GM12878 (cell line): ENCODE measurements at regions of chr15 and their contacts with region 1.

Region 1: DNA sequence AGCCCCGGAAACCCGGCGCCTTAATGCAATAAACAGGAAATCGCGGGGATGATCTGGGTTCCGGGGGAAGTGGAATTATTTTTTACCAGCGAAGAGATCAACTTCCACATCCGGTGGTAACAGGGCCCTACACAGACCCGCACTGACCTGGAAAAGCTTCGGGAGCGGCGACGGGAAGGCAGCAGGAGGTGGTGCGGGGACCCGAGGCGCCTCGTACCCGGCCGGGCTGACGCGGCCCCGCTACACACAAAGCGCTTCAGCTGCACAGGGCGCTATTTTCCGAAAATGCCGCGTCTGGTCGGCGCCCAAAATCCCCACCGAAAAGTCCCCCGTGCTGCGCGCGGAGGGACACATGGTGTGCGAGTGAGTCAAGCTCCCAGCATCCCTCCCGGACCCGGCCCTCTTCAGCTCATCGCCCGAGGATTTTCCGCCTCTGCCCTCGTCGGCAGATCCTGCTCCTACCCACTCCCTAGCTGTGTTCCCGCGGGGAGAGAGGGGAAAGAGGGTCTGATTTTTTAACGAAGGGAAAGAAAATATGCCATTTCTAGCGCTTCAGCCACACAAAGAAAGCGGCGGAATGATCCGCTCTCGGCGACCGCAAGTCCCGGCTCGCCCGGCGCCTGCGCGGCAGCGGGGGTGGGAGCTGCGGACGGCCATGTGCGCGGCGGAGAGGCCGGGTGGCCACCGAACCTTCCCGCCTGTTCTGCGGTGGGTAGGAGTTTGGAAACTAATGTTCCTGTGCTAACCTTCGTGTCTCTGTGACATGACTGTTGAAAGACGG is at the start of gene GABPB1:
- DNase-seq: peak; percentile 60
- ATAC-seq: peak; percentile 56
- H3K4me3 ChIP-seq: peak within 1 kb of the TSS; percentile 82
- H3K27ac ChIP-seq: peak within 1 kb of the TSS; percentile 91
- H3K4me1 ChIP-seq: peaks cover 10% of the 10 kb centered on the region
- H3K27me3 ChIP-seq: no peaks in the 10 kb centered on the region
- CTCF ChIP-seq: no peak
- EP300 ChIP-seq: no peak
- POLR2A ChIP-seq: peak; percentile 90
- RAD21 ChIP-seq: no peak
- polyA plus RNA-seq, gene GABPB1: 13.9 to 18.2 TPM

Region 2: GRCh38 chr15:50340416-50340815 is 14.6 kb before region 1 on chr15:
- CTCF ChIA-PET with region 1: interaction called, 5 read pairs
- POLR2A ChIA-PET with region 1: interaction called, 20 read pairs
- RAD21 ChIA-PET with region 1: interaction called, 10 read pairs
- SMC1A ChIA-PET with region 1: interaction called, 4 read pairs
- in situ Hi-C with region 1: no loop called
- intact Hi-C with region 1: no loop called
- DNase-seq: no peak
- ATAC-seq: no peak
- H3K4me3 ChIP-seq: no peak overlapping the region
- H3K27ac ChIP-seq: no peak overlapping the region
- H3K4me1 ChIP-seq: no peaks in the 10 kb centered on the region
- H3K27me3 ChIP-seq: no peaks in the 10 kb centered on the region
- CTCF ChIP-seq: no peak
- EP300 ChIP-seq: no peak
- POLR2A ChIP-seq: no peak
- RAD21 ChIP-seq: no peak

Region 3: DNA sequence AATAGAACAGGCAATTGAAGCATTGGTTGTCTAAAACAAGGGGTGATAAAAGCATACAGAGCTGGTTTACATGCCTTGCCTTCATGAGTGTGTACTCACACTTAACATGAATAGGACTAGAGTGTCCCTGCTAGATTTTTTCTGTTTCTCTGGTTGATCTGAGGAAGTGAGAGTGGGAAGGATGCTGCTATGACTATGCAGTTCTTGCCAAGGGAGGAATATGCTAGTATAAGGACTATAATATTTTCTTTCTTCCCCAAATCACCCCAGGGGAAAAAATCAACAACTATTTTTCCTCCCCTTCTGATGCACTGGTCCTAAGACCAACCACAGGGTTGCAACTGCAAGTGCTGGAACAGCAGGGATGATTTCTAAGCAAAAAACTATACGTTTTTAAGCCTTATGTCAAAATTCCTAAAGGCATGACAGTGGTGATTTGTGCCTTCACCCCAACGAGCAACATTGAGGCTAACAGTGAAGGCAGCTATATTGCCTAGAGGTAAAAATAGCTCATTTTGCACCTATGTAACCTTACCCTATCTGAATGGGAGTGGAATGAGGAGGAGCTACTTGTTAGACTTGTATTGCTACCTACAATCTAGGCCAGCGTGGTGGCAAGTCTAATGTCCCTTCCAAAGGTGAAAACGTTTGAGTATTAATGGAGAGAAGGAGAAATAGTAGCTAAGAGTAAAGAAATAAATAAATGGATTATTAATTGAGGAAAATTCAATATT is 35.7 kb after region 1 on chr15:
- CTCF ChIA-PET with region 1: interaction called, 4 read pairs
- POLR2A ChIA-PET with region 1: interaction called, 3 read pairs
- RAD21 ChIA-PET with region 1: interaction called, 3 read pairs
- SMC1A ChIA-PET with region 1: interaction called, 7 read pairs
- in situ Hi-C with region 1: no loop called
- intact Hi-C with region 1: loop called (anchors 1 kb)
- DNase-seq: peak; percentile 49
- ATAC-seq: peak; percentile 91
- H3K4me3 ChIP-seq: peak overlapping the region; percentile 13; the same call in 1 of the 2 replicates
- H3K27ac ChIP-seq: peak overlapping the region; percentile 1; the same call in 1 of the 2 replicates
- H3K4me1 ChIP-seq: peaks cover 14% of the 10 kb centered on the region
- H3K27me3 ChIP-seq: no peaks in the 10 kb centered on the region
- CTCF ChIP-seq: no peak
- EP300 ChIP-seq: peak in 1 of 2 experiments; percentile 87; a peak in 2 of 4 replicates
- POLR2A ChIP-seq: no peak
- RAD21 ChIP-seq: no peak

Region 4: GRCh38 chr15:50440932-50441331 is 85.9 kb after region 1 on chr15:
- CTCF ChIA-PET with region 1: interaction called, 3 read pairs
- POLR2A ChIA-PET with region 1: interaction called, 3 read pairs
- RAD21 ChIA-PET with region 1: no interaction called
- SMC1A ChIA-PET with region 1: interaction called, 6 read pairs
- in situ Hi-C with region 1: loop called (anchors 10 kb)
- intact Hi-C with region 1: loop called (anchors 2 kb)
- DNase-seq: no peak
- ATAC-seq: no peak
- H3K4me3 ChIP-seq: no peak overlapping the region
- H3K27ac ChIP-seq: no peak overlapping the region
- H3K4me1 ChIP-seq: peaks cover 13% of the 10 kb centered on the region
- H3K27me3 ChIP-seq: no peaks in the 10 kb centered on the region
- CTCF ChIP-seq: no peak
- EP300 ChIP-seq: no peak
- POLR2A ChIP-seq: no peak
- RAD21 ChIP-seq: no peak

Region 5: GRCh38 chr15:50908210-50909009 is 553.4 kb after region 1 on chr15 and contains the start of gene AP4E1:
- CTCF ChIA-PET with region 1: no interaction called
- POLR2A ChIA-PET with region 1: no interaction called
- RAD21 ChIA-PET with region 1: no interaction called
- SMC1A ChIA-PET with region 1: no interaction called
- in situ Hi-C with region 1: loop called (anchors 10 kb)
- intact Hi-C with region 1: loop called (anchors 5 kb)
- DNase-seq: peak; percentile 79
- ATAC-seq: peak; percentile 74
- H3K4me3 ChIP-seq: peak within 1 kb of the TSS; percentile 99
- H3K27ac ChIP-seq: peak within 1 kb of the TSS; percentile 90
- H3K4me1 ChIP-seq: no peaks in the 10 kb centered on the region; the same call in 1 of the 2 replicates
- H3K27me3 ChIP-seq: no peaks in the 10 kb centered on the region
- CTCF ChIP-seq: peak; percentile 92 to 98 (median 96); a peak in 5 of 6 replicates
- EP300 ChIP-seq: peak; percentile 26 to 35; a peak in 1 of 4 replicates
- POLR2A ChIP-seq: peak; percentile 86
- RAD21 ChIP-seq: peak; percentile 95
- polyA plus RNA-seq, gene AP4E1: 1.2 to 1.6 TPM